HEK293 (cell line): ENCODE measurements at regions of chr11 and their contacts with region 1.

Region 1: GRCh38 chr11:12361682-12362081 is 15.7 kb upstream of the PARVA start:
- H3K4me3 ChIP-seq: no peak overlapping the region
- H3K27ac ChIP-seq: no peak overlapping the region
- H3K4me1 ChIP-seq: no peaks in the 10 kb centered on the region
- CTCF ChIP-seq: no peak

Region 2: GRCh38 chr11:12377824-12378593 is 16.3 kb after region 1 on chr11:
- CTCF ChIA-PET with region 1: interaction called, 8 read pairs
- POLR2A ChIA-PET with region 1: interaction called, 11 read pairs
- H3K4me3 ChIP-seq: peak overlapping the region; percentile 88
- H3K27ac ChIP-seq: peak overlapping the region; percentile 70; the same call in 1 of the 2 replicates
- H3K4me1 ChIP-seq: no peaks in the 10 kb centered on the region
- CTCF ChIP-seq: no peak

Region 3: DNA sequence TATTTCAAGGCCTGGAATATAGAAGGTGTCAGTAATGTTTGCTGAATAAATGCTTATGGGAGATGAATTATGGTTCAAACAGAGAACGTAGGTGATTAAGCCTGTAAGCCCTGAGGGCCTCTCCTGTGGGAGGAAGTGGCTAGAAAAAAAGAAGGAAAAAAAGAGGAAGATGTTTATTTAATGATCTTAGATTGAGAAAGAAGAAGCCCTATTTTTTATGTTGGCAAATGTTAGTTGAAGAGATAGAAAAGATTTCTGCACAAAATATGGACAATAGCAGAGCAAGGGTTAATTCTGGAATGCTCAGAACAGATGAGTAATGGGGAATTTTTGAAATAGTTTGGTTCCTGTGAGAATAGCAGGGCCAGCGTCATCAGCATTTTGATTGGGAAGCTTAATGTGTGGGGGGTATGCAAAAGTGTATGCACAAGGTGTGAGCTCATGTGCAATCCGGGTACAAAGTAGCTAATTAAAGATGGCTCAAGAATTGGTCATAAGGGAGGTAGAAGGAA is 408.2 kb after region 1 on chr11:
- CTCF ChIA-PET with region 1: no interaction called
- POLR2A ChIA-PET with region 1: no interaction called
- H3K4me3 ChIP-seq: no peak overlapping the region
- H3K27ac ChIP-seq: no peak overlapping the region
- H3K4me1 ChIP-seq: no peaks in the 10 kb centered on the region
- CTCF ChIP-seq: no peak